Transverse colon (tissue), 4 donors: ENCODE measurements at regions of chr7 and their contacts with region 1.

Region 1: GRCh38 chr7:140326116-140326928 is 72.0 kb downstream of the SLC37A3 start:
- DNase-seq: peak; percentile 84
- H3K4me3 ChIP-seq: peak overlapping the region in 1 of 4 donors; percentile 28
- H3K27ac ChIP-seq: peak overlapping the region; percentile 76 to 85 (median 78)
- H3K4me1 ChIP-seq: peaks cover 7 to 39% (median 29%) of the 10 kb centered on the region in 4 donors
- H3K27me3 ChIP-seq: no peaks in the 10 kb centered on the region
- CTCF ChIP-seq: peak; percentile 61 to 71 (median 67)
- EP300 ChIP-seq: no peak
- POLR2A ChIP-seq: no peak

Region 2: GRCh38 chr7:139696552-139696951 is 629.8 kb before region 1 on chr7:
- in situ Hi-C with region 1: no loop called
- intact Hi-C with region 1: no loop called
- DNase-seq: no peak
- H3K4me3 ChIP-seq: no peak overlapping the region
- H3K27ac ChIP-seq: peak overlapping the region in 3 of 4 donors; percentile 6 to 43 (median 18)
- H3K4me1 ChIP-seq: peaks cover 7 to 34% (median 15%) of the 10 kb centered on the region in 4 donors
- H3K27me3 ChIP-seq: no peaks in the 10 kb centered on the region
- CTCF ChIP-seq: no peak
- EP300 ChIP-seq: no peak
- POLR2A ChIP-seq: no peak

Region 3: GRCh38 chr7:140062528-140063299 is 263.6 kb before region 1 on chr7 and contains the start of gene PARP12:
- in situ Hi-C with region 1: loop called in 1 of 4 experiments (anchors 25 kb)
- intact Hi-C with region 1: loop called (anchors 5 kb)
- DNase-seq: peak; percentile 94
- H3K4me3 ChIP-seq: peak within 1 kb of the TSS; percentile 61 to 86 (median 64)
- H3K27ac ChIP-seq: peak within 1 kb of the TSS; percentile 90 to 94 (median 90)
- H3K4me1 ChIP-seq: peaks cover 26 to 45% (median 38%) of the 10 kb centered on the region in 4 donors
- H3K27me3 ChIP-seq: no peaks in the 10 kb centered on the region
- CTCF ChIP-seq: no peak
- EP300 ChIP-seq: no peak
- POLR2A ChIP-seq: peak; percentile 82
- total RNA-seq, gene PARP12: 20.9 to 105 (median 83.9) TPM

Region 4: DNA sequence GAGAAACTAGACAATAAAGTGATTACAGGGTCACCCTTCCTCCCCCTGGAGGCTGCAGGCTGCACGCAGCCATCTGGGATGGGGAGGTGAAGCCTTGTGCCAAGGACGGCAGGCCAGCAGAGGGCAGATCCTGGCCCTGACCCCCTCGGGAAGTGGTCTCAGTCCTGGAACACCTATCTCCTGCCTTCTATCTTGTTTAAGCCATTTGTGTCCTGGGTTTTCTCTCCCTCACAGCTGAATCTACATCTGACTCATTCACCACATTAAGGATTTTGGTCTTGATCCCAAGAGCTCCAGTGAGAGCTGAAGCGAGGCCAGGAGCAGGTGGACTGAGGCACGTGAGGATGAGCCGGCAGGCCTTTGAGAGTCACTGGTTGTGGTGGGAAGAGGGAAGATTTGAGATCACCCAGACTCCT is 247.2 kb before region 1 on chr7:
- in situ Hi-C with region 1: loop called in 2 of 4 experiments (anchors 25 kb)
- intact Hi-C with region 1: no loop called
- DNase-seq: no peak
- H3K4me3 ChIP-seq: no peak overlapping the region
- H3K27ac ChIP-seq: no peak overlapping the region
- H3K4me1 ChIP-seq: peaks cover 0 to 4% (median 0%) of the 10 kb centered on the region in 4 donors
- H3K27me3 ChIP-seq: no peaks in the 10 kb centered on the region
- CTCF ChIP-seq: no peak
- EP300 ChIP-seq: no peak
- POLR2A ChIP-seq: no peak

Region 5: DNA sequence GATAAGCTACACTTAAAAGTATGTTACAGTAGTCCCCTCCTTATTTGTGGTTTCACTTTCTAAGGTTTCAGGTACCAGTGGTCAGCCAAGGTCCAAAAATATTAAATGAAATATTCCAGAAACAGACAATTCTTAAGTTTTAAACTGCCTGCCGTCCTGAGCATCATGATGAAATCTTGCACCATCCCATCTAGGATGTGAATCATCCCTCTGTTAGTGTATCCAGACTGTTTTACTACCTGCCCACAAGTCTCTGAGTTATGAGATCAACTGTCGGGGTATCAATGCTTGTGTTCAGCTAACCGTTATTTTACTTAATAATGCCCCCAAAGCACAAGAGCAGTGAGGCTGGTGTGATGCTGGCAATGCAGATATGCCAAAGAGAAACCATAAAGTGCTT is 160.9 kb before region 1 on chr7:
- in situ Hi-C with region 1: loop called in 3 of 4 experiments (anchors 10 to 25 kb)
- intact Hi-C with region 1: no loop called
- DNase-seq: no peak
- H3K4me3 ChIP-seq: no peak overlapping the region
- H3K27ac ChIP-seq: no peak overlapping the region
- H3K4me1 ChIP-seq: peaks cover 4 to 94% (median 20%) of the 10 kb centered on the region in 4 donors
- H3K27me3 ChIP-seq: no peaks in the 10 kb centered on the region
- CTCF ChIP-seq: no peak
- EP300 ChIP-seq: no peak
- POLR2A ChIP-seq: no peak

Region 6: DNA sequence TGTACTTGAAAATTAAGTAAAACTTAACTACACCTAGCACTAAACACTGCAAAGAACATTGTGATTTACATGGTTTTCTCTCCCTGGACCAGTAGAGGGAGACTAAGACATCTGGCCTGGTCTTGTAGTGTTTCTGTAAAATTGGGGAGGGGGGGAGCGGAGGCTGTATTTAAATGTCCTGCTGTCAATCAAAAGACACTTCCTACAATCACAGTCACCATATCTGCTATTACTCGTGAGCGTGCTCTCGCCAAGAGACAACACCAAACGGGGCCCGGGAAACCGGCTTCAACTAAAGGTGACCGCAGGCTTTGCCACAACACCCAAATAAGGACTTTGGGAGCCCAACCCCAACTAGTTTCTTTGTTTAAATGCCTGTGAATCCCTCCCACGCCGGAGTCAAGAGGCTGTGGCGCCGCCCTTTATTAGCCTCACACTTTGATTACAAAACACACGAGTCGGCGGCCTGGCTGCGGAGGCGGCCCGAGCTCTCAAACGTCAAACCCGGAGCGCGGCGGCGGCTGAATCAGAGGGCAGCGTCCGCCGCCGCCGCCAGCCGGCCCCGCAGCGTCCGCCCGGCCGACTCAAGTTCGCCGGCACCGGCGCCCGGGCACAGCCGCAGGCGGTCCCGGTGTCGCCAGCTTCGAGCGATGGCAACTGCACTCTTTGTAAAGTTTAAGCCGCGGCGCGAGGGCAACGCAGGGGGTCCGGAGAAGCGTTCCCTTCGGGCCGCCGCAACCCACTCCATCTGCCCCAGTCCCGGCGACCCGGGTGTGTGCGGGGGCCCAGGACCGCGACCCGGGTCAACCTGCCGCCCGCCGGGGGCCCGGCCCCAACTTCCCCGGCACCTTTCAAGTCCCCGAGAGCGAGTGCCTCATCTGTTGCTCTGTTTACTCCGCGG is 150.9 kb before region 1 on chr7:
- in situ Hi-C with region 1: loop called in 2 of 4 experiments (anchors 25 kb)
- intact Hi-C with region 1: loop called (anchors 2 kb)
- DNase-seq: peak; percentile 92
- H3K4me3 ChIP-seq: peak overlapping the region; percentile 94 to 98 (median 96)
- H3K27ac ChIP-seq: peak overlapping the region; percentile 99 to 100 (median 100)
- H3K4me1 ChIP-seq: peaks cover 0 to 59% (median 34%) of the 10 kb centered on the region in 4 donors
- H3K27me3 ChIP-seq: no peaks in the 10 kb centered on the region
- CTCF ChIP-seq: peak; percentile 70 to 95 (median 73)
- EP300 ChIP-seq: peak; percentile 8
- POLR2A ChIP-seq: peak; percentile 94

Region 7: DNA sequence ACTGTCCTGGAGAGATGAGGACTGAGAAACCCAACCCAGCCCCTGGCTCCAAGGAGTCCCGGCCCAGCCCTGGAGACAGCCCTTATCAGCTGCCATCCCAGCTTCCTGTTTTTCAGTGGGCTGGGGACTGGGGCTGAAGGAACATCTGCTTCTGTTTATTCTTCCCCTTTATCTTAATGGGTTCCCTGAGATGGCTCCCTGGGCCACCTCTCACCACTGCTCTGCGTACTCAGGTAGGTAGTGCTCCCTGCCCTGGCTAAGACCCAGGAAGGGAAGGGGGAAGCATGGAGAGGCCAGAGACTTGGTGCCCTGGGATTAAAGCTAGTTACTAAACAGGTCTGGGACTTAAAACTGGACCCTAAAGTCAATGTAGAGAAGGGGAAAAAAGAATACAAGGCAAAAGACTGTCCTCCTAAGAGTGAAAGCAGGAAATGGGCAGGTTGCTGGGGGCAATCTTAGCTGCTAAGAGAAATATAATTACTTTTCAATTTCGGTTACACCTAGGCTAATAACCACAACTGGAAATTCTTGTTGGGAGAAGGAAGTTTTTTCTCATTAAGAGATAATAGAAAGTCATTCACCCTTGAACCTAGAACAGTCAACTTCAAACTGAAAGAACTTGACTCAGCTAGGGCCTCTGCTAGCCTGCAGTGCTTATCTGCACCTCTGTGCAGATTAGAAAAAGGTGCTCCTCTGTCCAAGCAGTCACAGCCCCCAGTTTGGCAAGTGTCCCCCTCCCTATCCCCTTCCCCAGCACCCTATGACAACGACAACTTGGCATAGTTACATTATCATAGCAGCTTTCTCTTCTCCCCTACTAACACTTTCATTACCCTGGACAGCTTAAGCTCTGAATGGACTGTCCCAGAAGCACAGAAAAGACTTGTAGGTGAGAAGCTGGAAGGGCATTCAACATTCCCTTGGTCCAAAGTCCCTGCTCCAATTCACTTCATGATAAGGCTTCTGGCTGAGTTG is 84.0 kb before region 1 on chr7:
- in situ Hi-C with region 1: no loop called
- intact Hi-C with region 1: no loop called
- DNase-seq: peak; percentile 62
- H3K4me3 ChIP-seq: peak overlapping the region in 1 of 4 donors; percentile 18
- H3K27ac ChIP-seq: peak overlapping the region; percentile 84 to 90 (median 88)
- H3K4me1 ChIP-seq: peaks cover 25 to 70% (median 51%) of the 10 kb centered on the region in 4 donors
- H3K27me3 ChIP-seq: no peaks in the 10 kb centered on the region
- CTCF ChIP-seq: peak in 2 of 5 experiments; percentile 18 to 39
- EP300 ChIP-seq: no peak
- POLR2A ChIP-seq: peak; percentile 24